ENCODE measurements at regions of chr3 and their contacts with region 1.

Region 1: GRCh38 chr3:27659279-27660021 is 62.7 kb downstream of the EOMES start:
- DNase-seq: peak; percentile 42 to 72 (median 60)
- ATAC-seq: peak; percentile 85
- H3K4me3 ChIP-seq: no peak overlapping the region
- H3K27ac ChIP-seq: no peak overlapping the region
- H3K4me1 ChIP-seq: no peaks in the 10 kb centered on the region
- H3K27me3 ChIP-seq: no peaks in the 10 kb centered on the region
- CTCF ChIP-seq: peak; percentile 56 to 67 (median 56)
- EP300 ChIP-seq: no peak
- POLR2A ChIP-seq: no peak
- RAD21 ChIP-seq: peak; percentile 34 to 52; a peak in 3 of 4 replicates

Region 2: GRCh38 chr3:27312044-27312668 is 347.3 kb before region 1 on chr3:
- CTCF ChIA-PET with region 1: no interaction called
- POLR2A ChIA-PET with region 1: no interaction called
- in situ Hi-C with region 1: no loop called
- intact Hi-C with region 1: loop called (anchors 10 kb)
- DNase-seq: peak; percentile 25 to 53 (median 48)
- ATAC-seq: peak; percentile 74
- H3K4me3 ChIP-seq: no peak overlapping the region
- H3K27ac ChIP-seq: no peak overlapping the region
- H3K4me1 ChIP-seq: no peaks in the 10 kb centered on the region
- H3K27me3 ChIP-seq: no peaks in the 10 kb centered on the region
- CTCF ChIP-seq: peak; percentile 19 to 63 (median 55); a peak in 5 of 6 replicates
- EP300 ChIP-seq: no peak
- POLR2A ChIP-seq: no peak
- RAD21 ChIP-seq: peak; percentile 57 to 68

Region 3: GRCh38 chr3:27544372-27544865 is 115.0 kb before region 1 on chr3:
- CTCF ChIA-PET with region 1: no interaction called
- POLR2A ChIA-PET with region 1: no interaction called
- in situ Hi-C with region 1: no loop called
- intact Hi-C with region 1: no loop called
- DNase-seq: no peak
- ATAC-seq: no peak
- H3K4me3 ChIP-seq: no peak overlapping the region
- H3K27ac ChIP-seq: no peak overlapping the region
- H3K4me1 ChIP-seq: no peaks in the 10 kb centered on the region
- H3K27me3 ChIP-seq: no peaks in the 10 kb centered on the region
- CTCF ChIP-seq: no peak
- EP300 ChIP-seq: no peak
- POLR2A ChIP-seq: no peak
- RAD21 ChIP-seq: no peak

Region 4: GRCh38 chr3:27643355-27643754 is 16.1 kb before region 1 on chr3:
- CTCF ChIA-PET with region 1: no interaction called
- POLR2A ChIA-PET with region 1: no interaction called
- in situ Hi-C with region 1: no loop called
- intact Hi-C with region 1: no loop called
- DNase-seq: no peak
- ATAC-seq: no peak
- H3K4me3 ChIP-seq: no peak overlapping the region
- H3K27ac ChIP-seq: no peak overlapping the region
- H3K4me1 ChIP-seq: no peaks in the 10 kb centered on the region
- H3K27me3 ChIP-seq: no peaks in the 10 kb centered on the region
- CTCF ChIP-seq: no peak
- EP300 ChIP-seq: no peak
- POLR2A ChIP-seq: no peak
- RAD21 ChIP-seq: no peak

Region 5: GRCh38 chr3:27712136-27713077 is 53.0 kb after region 1 on chr3:
- CTCF ChIA-PET with region 1: no interaction called
- POLR2A ChIA-PET with region 1: no interaction called
- in situ Hi-C with region 1: no loop called
- intact Hi-C with region 1: no loop called
- DNase-seq: peak; percentile 57 to 71 (median 66)
- ATAC-seq: peak; percentile 97
- H3K4me3 ChIP-seq: no peak overlapping the region
- H3K27ac ChIP-seq: no peak overlapping the region
- H3K4me1 ChIP-seq: peaks cover 0 to 4% of the 10 kb centered on the region in 2 experiments; a peak in 1 of 5 replicates
- H3K27me3 ChIP-seq: peaks cover 12 to 31% of the 10 kb centered on the region in 2 experiments; a peak in 3 of 5 replicates
- CTCF ChIP-seq: peak; percentile 48 to 64 (median 60)
- EP300 ChIP-seq: no peak
- POLR2A ChIP-seq: no peak
- RAD21 ChIP-seq: peak; percentile 53 to 66